ENCODE measurements at regions of chr1 and their contacts with region 1.

Region 1: GRCh38 chr1:46556822-46557221 is 5.4 kb upstream of the KNCN start:
- DNase-seq: peak; percentile 38
- H3K4me3 Mint-ChIP-seq: no peak overlapping the region
- H3K27ac Mint-ChIP-seq: no peak overlapping the region
- H3K4me1 Mint-ChIP-seq: no peaks in the 10 kb centered on the region
- H3K27me3 Mint-ChIP-seq: peaks cover 11% of the 10 kb centered on the region
- CTCF ChIP-seq: no peak

Region 2: DNA sequence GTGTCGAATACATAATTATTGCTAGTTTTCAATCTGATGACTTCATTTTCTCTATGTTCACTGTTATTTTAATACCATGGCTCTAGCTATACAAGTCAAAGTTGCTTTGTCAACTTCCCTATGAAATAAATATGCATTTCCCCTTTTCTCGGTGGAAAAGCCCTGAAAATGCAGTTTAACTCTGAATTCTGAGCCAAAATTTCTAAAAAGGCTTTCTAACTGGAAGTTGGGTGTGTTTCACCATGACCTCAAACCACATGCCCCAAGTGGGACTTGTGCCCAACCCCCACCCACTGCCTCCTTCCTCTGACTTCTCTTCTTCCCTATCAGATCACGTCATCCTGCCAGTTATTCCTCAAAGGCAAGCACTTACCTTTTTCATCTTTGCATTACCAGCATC is 38.3 kb after region 1 on chr1:
- CTCF ChIA-PET with region 1: no interaction called
- POLR2A ChIA-PET with region 1: no interaction called
- intact Hi-C with region 1: no loop called
- DNase-seq: no peak
- H3K4me3 Mint-ChIP-seq: no peak overlapping the region
- H3K27ac Mint-ChIP-seq: no peak overlapping the region
- H3K4me1 Mint-ChIP-seq: peaks cover 13% of the 10 kb centered on the region
- H3K27me3 Mint-ChIP-seq: no peaks in the 10 kb centered on the region
- CTCF ChIP-seq: no peak

Region 3: GRCh38 chr1:46718727-46719622 is 162.2 kb after region 1 on chr1 and contains the start of gene EFCAB14:
- CTCF ChIA-PET with region 1: no interaction called
- POLR2A ChIA-PET with region 1: no interaction called
- intact Hi-C with region 1: loop called (anchors 2 kb)
- DNase-seq: peak; percentile 97
- H3K4me3 Mint-ChIP-seq: peak within 1 kb of the TSS; percentile 82
- H3K27ac Mint-ChIP-seq: peak within 1 kb of the TSS; percentile 90
- H3K4me1 Mint-ChIP-seq: peaks cover 25% of the 10 kb centered on the region
- H3K27me3 Mint-ChIP-seq: no peaks in the 10 kb centered on the region
- CTCF ChIP-seq: no peak
- total RNA-seq, gene EFCAB14: 33.9 and 48.1 TPM in 2 replicates